Calu3 (cell line): ENCODE measurements at regions of chr1 and their contacts with region 1.

Region 1: GRCh38 chr1:84781946-84782771 is 91.9 kb upstream of the SSX2IP start:
- DNase-seq: peak; percentile 92
- H3K4me3 Mint-ChIP-seq: peak overlapping the region; percentile 73
- H3K27ac Mint-ChIP-seq: peak overlapping the region; percentile 45
- H3K4me1 Mint-ChIP-seq: peaks cover 6% of the 10 kb centered on the region
- H3K27me3 Mint-ChIP-seq: no peaks in the 10 kb centered on the region
- CTCF ChIP-seq: peak; percentile 91

Region 2: DNA sequence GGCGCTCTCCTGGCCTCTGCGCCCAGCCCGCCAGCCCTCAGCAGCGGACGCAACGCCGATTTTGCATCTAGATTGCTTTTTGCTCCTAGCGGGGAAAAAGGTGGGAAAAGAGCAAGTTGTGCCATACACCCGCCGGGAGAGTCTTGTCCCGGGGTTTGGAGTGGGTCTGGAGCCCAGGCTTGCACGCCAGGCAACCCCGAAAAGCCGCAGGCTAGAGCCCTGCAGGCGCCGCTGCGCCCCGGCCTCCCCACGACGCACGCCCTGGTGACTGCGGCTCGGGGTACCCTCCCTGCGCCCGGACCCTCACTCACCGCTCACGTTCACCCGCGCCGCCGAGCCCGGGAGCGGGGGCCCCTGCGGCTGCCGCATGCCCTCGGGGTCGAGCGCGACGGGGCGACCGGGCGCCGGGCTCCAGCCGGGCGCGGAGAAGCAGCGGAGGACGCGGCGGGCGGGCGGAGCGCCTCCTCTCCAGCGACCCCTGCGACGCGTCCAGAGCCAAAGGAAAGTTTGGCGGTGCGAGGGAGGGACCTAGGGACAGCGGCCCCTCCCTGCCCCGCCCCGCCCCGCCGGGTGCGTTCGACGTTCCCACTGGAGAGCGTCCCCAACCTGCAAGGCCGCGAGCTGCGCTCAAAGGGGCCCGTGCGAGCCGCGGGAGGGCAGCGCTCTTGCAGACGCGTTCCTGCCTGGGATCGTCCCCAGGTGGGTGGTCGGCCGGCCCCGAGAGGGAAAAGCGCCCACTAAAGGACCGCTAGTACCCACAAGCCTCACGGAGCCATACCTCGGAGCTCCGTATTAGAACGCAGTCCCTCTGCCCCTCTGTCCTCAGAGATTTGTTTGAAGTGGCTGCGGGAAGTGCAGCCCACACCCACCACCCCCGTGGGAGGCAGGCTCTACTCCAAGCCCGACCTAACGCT is 110.8 kb after region 1 on chr1 and contains the start of gene LPAR3:
- CTCF ChIA-PET with region 1: interaction called, 5 read pairs
- intact Hi-C with region 1: loop called (anchors 5 kb)
- DNase-seq: peak; percentile 78
- H3K4me3 Mint-ChIP-seq: peak within 1 kb of the TSS; percentile 79
- H3K27ac Mint-ChIP-seq: peak within 1 kb of the TSS; percentile 55
- H3K4me1 Mint-ChIP-seq: peaks cover 42% of the 10 kb centered on the region
- H3K27me3 Mint-ChIP-seq: no peaks in the 10 kb centered on the region
- CTCF ChIP-seq: no peak
- total RNA-seq, gene LPAR3: 13.2 and 14.0 TPM in 2 replicates